Activated CD4-positive, alpha-beta memory T cell treated with anti-CD3 and anti-CD28 coated beads, Interleukin-2, amount 10 ng/mL, durations not matched to agents 7 days and 5 days (primary cell): ENCODE measurements at regions of chr2 and their contacts with region 1.

Region 1: DNA sequence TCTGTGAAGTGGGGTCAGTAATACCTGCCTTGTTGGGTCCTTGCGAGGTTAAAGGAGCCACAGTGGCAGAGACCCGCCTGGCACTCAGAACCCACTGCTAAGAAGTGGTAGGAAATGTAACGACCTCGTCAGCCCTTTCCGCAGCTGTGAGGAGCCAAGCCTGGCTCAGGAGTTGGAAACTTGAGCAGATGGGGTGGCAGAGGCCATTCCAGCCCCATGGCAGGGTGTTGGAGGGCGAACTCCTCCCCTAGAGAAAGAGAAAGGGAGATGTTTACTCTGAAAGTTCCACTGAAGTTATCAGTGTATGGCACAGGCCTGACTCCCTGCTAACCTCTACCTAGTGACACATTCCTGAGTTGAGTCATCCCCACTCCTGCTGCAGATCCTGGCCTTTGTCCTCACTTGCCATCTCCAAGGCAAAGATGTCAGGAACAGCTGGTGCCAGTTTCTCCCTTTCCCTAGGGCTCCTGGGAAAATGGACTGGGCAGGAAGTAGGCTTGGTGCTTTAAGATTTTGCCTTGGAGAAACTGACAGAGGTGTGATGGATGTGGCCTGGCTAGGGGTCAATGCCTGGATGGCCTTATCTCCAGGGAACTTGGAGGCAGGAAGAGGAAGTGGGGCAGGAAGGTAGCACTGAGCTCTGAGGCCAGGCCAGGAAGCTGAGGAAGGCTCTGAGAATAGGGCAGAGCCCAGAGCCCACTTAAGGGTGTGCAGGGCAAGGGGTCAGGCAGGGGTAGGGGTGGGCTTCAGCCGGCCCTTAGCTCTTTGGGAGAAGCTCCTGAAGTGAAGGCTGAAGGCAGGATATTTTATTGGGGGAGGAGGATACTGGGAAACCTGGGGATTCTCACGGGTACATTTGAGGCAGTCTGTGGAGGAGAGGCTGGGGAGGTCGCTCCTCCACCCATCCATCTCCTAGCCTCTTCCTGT is 889 bp downstream of the VAMP5 start:
- DNase-seq: peak; percentile 29
- H3K4me3 Mint-ChIP-seq: peak overlapping the region; percentile 91
- H3K27ac Mint-ChIP-seq: peak overlapping the region; percentile 89
- H3K4me1 Mint-ChIP-seq: peaks cover 58% of the 10 kb centered on the region
- H3K27me3 Mint-ChIP-seq: no peaks in the 10 kb centered on the region

Region 2: DNA sequence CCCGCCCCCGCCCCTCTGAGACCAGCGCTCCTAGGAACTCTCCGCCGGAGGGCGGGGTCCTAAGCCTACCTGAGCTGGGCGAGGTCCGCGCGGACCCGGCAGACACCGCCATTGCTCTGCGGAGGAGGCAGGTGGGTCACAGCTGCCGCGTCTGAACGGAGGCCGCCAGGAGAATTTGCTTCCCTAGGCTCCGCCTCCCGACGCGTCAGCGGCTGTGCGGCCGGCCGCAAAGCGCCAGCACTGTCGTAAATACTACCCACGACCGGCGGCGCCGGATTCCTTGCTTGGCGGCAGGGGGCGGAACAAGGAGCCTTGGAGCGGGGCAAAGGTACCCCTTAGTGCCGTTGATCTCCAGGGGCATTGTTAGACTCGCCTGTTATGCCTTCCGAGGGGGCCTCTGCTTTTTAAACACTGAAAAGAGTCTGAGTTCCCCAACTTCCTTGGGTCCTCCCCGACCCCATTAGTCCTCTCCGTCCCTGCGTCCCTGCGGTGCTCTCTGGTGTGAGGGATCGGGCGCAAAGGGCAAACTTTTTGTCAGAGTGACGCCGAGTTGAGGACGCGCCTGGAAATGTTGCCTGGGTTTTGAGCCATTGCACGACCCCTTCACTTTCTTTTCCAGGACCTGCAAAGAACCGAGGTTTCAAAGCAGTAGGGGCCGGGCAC is 23.7 kb before region 1 on chr2 and contains the start of gene GGCX:
- CTCF ChIA-PET with region 1: no interaction called
- POLR2A ChIA-PET with region 1: interaction called, 13 read pairs
- DNase-seq: peak; percentile 96
- H3K4me3 Mint-ChIP-seq: peak within 1 kb of the TSS; percentile 87
- H3K27ac Mint-ChIP-seq: peak within 1 kb of the TSS; percentile 90
- H3K4me1 Mint-ChIP-seq: peaks cover 36% of the 10 kb centered on the region
- H3K27me3 Mint-ChIP-seq: no peaks in the 10 kb centered on the region
- total RNA-seq, gene GGCX: 22.5 to 22.8 TPM

Region 3: DNA sequence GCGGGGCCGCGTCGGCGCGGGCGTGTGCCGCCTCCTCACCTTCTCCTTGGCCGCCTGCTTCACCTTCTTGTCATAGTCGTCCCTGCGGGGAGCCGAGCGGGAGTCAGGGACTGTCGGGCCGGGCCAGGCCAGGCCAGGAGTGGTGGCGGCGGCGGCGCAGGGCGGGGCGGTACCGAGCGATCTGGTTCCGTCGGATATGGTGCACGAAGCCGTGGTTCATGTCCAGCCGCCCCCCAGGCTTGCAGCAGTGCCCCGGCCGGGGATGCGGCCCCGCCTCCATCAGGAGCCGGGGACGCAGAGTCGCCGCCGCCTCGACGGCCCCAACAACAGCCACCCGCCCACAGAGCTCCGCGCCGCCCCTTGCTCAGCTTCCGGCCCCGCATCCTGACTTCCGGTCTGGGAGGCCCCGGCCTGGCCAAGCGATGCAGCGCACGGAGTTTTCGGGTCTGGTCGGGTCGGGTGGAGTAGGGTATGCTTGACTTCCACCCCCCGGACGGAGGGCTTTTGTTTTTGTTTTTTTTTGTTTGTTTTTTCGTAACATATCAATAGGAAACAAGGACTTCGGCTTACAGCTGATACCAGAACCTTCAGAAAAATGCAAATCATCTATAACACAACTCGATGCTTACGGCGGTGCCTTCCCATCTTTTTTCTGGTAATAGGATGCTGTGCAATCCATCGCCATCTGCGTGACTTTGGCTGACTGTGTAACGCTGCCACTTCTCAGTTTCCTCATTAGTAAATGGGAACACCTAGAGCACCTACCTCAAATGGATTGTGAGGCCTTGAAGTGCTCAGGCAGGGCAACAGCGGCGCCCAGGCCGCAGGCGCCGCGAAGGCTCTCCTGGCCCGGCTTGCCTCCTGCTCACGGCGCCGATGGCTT is 26.8 kb after region 1 on chr2 and contains the start of gene C2orf68:
- CTCF ChIA-PET with region 1: interaction called, 4 read pairs
- POLR2A ChIA-PET with region 1: interaction called, 11 read pairs
- DNase-seq: peak; percentile 90
- H3K4me3 Mint-ChIP-seq: peak within 1 kb of the TSS; percentile 94
- H3K27ac Mint-ChIP-seq: peak within 1 kb of the TSS; percentile 86
- H3K4me1 Mint-ChIP-seq: peaks cover 46% of the 10 kb centered on the region
- H3K27me3 Mint-ChIP-seq: no peaks in the 10 kb centered on the region
- total RNA-seq, gene C2orf68: 48.8 to 50.9 TPM